PC-9 (cell line): ENCODE measurements at regions of chr5 and their contacts with region 1.

Region 1: DNA sequence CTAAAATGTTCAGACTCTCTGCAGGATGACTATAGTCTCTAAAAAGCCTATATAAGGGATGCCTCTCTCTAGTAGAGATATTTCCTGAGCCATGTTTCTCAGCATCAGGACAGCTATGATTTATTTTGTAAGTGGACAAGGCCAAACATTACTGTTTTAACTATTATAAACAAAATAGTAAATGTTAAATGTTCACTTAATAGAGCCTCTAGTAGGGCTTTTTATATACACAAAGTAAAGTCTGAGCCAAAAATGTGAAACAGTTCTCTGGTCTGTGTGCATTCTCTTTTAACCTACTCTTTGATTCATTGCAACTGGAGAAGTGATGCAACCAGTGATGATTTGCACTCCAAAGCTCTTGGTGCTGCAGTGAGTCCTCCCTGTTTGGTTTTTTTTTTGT is 220.5 kb downstream of the GDNF start:
- DNase-seq: no peak
- H3K4me3 ChIP-seq: no peak overlapping the region
- H3K27ac ChIP-seq: no peak overlapping the region
- H3K4me1 ChIP-seq: no peaks in the 10 kb centered on the region
- H3K27me3 ChIP-seq: no peaks in the 10 kb centered on the region
- CTCF ChIP-seq: no peak

Region 2: GRCh38 chr5:37598733-37599132 is 20.6 kb before region 1 on chr5:
- CTCF ChIA-PET with region 1: no interaction called
- POLR2A ChIA-PET with region 1: no interaction called
- intact Hi-C with region 1: no loop called
- DNase-seq: no peak
- H3K4me3 ChIP-seq: no peak overlapping the region
- H3K27ac ChIP-seq: no peak overlapping the region
- H3K4me1 ChIP-seq: no peaks in the 10 kb centered on the region
- H3K27me3 ChIP-seq: no peaks in the 10 kb centered on the region
- CTCF ChIP-seq: no peak

Region 3: GRCh38 chr5:37637165-37637845 is 18.0 kb after region 1 on chr5:
- CTCF ChIA-PET with region 1: no interaction called
- POLR2A ChIA-PET with region 1: interaction called, 16 read pairs
- intact Hi-C with region 1: no loop called
- DNase-seq: no peak
- H3K4me3 ChIP-seq: no peak overlapping the region
- H3K27ac ChIP-seq: no peak overlapping the region
- H3K4me1 ChIP-seq: no peaks in the 10 kb centered on the region
- H3K27me3 ChIP-seq: no peaks in the 10 kb centered on the region
- CTCF ChIP-seq: no peak